Activated naive CD4-positive, alpha-beta T cell treated with anti-CD3 and anti-CD28 coated beads for 36 hours (primary cell): ENCODE measurements at regions of chr13 and their contacts with region 1.

Region 1: GRCh38 chr13:40666045-40666904 is at the start of gene FOXO1:
- DNase-seq: peak; percentile 84
- H3K4me3 Mint-ChIP-seq: peak within 1 kb of the TSS; percentile 92
- H3K27ac Mint-ChIP-seq: peak within 1 kb of the TSS; percentile 94
- H3K4me1 Mint-ChIP-seq: peaks cover 40% of the 10 kb centered on the region
- H3K27me3 Mint-ChIP-seq: no peaks in the 10 kb centered on the region
- total RNA-seq, gene FOXO1: 30.9 to 32.1 TPM

Region 2: DNA sequence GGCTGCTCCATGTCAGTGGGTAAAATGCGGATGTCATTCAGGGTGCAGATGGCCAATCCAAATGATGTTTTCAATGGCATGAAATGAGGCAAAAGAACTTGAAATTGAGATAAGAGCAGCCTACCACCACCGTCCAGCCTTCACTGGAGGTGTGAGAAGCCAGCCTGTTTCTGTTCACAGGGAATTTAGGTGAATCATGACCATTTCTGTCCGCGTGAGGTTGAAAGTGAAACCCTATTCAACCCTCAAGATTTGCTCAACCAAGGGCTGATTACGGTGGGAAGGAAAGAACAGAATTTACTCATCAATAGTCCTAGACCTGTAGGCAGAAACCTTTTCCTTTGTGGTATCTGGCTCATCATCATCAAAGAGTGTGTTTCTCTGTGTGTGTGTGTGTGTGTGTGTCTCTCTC is 640.1 kb before region 1 on chr13:
- CTCF ChIA-PET with region 1: no interaction called
- intact Hi-C with region 1: loop called (anchors 1 kb)
- DNase-seq: peak; percentile 82
- H3K4me3 Mint-ChIP-seq: no peak overlapping the region
- H3K27ac Mint-ChIP-seq: no peak overlapping the region
- H3K4me1 Mint-ChIP-seq: peaks cover 33% of the 10 kb centered on the region
- H3K27me3 Mint-ChIP-seq: peaks cover 2% of the 10 kb centered on the region

Region 3: GRCh38 chr13:40190641-40191100 is 475.6 kb before region 1 on chr13:
- CTCF ChIA-PET with region 1: no interaction called
- intact Hi-C with region 1: loop called (anchors 1 kb)
- DNase-seq: peak; percentile 91
- H3K4me3 Mint-ChIP-seq: peak overlapping the region; percentile 36
- H3K27ac Mint-ChIP-seq: peak overlapping the region; percentile 81
- H3K4me1 Mint-ChIP-seq: peaks cover 69% of the 10 kb centered on the region
- H3K27me3 Mint-ChIP-seq: no peaks in the 10 kb centered on the region

Region 4: GRCh38 chr13:40230833-40231266 is 435.4 kb before region 1 on chr13:
- CTCF ChIA-PET with region 1: no interaction called
- intact Hi-C with region 1: no loop called
- DNase-seq: peak; percentile 30
- H3K4me3 Mint-ChIP-seq: no peak overlapping the region
- H3K27ac Mint-ChIP-seq: no peak overlapping the region
- H3K4me1 Mint-ChIP-seq: peaks cover 22% of the 10 kb centered on the region
- H3K27me3 Mint-ChIP-seq: no peaks in the 10 kb centered on the region

Region 5: GRCh38 chr13:40318366-40318765 is 347.9 kb before region 1 on chr13:
- CTCF ChIA-PET with region 1: no interaction called
- intact Hi-C with region 1: loop called (anchors 2 kb)
- DNase-seq: peak; percentile 23
- H3K4me3 Mint-ChIP-seq: no peak overlapping the region
- H3K27ac Mint-ChIP-seq: no peak overlapping the region
- H3K4me1 Mint-ChIP-seq: peaks cover 64% of the 10 kb centered on the region
- H3K27me3 Mint-ChIP-seq: no peaks in the 10 kb centered on the region

Region 6: GRCh38 chr13:40485611-40486517 is 180.4 kb before region 1 on chr13:
- CTCF ChIA-PET with region 1: interaction called, 4 read pairs
- intact Hi-C with region 1: loop called (anchors 1 kb)
- DNase-seq: peak; percentile 86
- H3K4me3 Mint-ChIP-seq: peak overlapping the region; percentile 8
- H3K27ac Mint-ChIP-seq: peak overlapping the region; percentile 83
- H3K4me1 Mint-ChIP-seq: peaks cover 82% of the 10 kb centered on the region
- H3K27me3 Mint-ChIP-seq: no peaks in the 10 kb centered on the region

Region 7: GRCh38 chr13:40644838-40645604 is 21.3 kb before region 1 on chr13:
- CTCF ChIA-PET with region 1: no interaction called
- intact Hi-C with region 1: loop called (anchors 1 kb)
- DNase-seq: peak; percentile 59
- H3K4me3 Mint-ChIP-seq: peak overlapping the region; percentile 38
- H3K27ac Mint-ChIP-seq: peak overlapping the region; percentile 89
- H3K4me1 Mint-ChIP-seq: peaks cover 92% of the 10 kb centered on the region
- H3K27me3 Mint-ChIP-seq: no peaks in the 10 kb centered on the region

Region 8: GRCh38 chr13:40770609-40770933 is 104.3 kb after region 1 on chr13:
- CTCF ChIA-PET with region 1: no interaction called
- intact Hi-C with region 1: no loop called
- DNase-seq: no peak
- H3K4me3 Mint-ChIP-seq: peak overlapping the region; percentile 98
- H3K27ac Mint-ChIP-seq: peak overlapping the region; percentile 95
- H3K4me1 Mint-ChIP-seq: peaks cover 32% of the 10 kb centered on the region
- H3K27me3 Mint-ChIP-seq: no peaks in the 10 kb centered on the region

Region 9: DNA sequence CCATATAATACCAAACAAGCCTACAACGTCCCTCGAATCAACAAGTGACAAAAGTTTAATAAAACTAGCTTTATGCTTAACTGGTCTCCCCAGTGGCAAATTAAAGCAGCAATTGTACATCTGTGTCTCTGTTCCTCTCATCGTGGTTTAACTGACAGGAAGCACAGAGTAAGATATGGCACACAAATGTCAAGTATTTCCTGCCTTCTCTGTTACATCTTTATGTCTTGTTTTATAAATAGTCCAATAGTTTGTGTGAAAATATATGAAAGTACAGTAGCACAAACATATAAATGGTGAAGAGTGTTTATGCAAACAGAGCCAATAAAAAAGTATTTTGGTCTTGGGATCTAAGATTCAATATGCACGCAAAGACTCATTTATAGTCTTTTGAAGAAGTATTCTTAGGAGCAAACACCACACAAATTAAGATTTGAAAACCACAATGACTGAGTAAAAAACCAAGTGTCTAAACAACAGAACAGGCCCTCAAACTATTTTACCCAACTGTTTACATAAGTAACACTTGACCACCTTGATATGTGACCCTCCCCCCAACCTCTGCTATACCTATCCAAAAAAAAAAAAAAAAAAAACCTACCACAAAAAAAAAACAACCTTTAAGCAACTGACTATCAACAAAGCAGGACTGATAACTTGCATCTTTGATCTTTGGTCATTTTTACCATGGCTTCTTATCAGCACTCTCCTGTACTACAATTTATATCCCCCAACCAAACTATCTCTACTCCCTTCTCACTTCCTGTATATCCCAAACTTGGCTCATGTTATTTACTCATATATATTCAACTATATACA is 338.8 kb after region 1 on chr13:
- CTCF ChIA-PET with region 1: no interaction called
- intact Hi-C with region 1: loop called (anchors 2 kb)
- DNase-seq: no peak
- H3K4me3 Mint-ChIP-seq: peak overlapping the region; percentile 55
- H3K27ac Mint-ChIP-seq: peak overlapping the region; percentile 93
- H3K4me1 Mint-ChIP-seq: peaks cover 70% of the 10 kb centered on the region
- H3K27me3 Mint-ChIP-seq: no peaks in the 10 kb centered on the region

Region 10: GRCh38 chr13:42671502-42671901 is 2005.2 kb after region 1 on chr13:
- CTCF ChIA-PET with region 1: no interaction called
- intact Hi-C with region 1: no loop called
- DNase-seq: no peak
- H3K4me3 Mint-ChIP-seq: no peak overlapping the region
- H3K27ac Mint-ChIP-seq: no peak overlapping the region
- H3K4me1 Mint-ChIP-seq: no peaks in the 10 kb centered on the region
- H3K27me3 Mint-ChIP-seq: peaks cover 3% of the 10 kb centered on the region